T-cell (primary cell): ENCODE measurements at regions of chr1 and their contacts with region 1.

Region 1: DNA sequence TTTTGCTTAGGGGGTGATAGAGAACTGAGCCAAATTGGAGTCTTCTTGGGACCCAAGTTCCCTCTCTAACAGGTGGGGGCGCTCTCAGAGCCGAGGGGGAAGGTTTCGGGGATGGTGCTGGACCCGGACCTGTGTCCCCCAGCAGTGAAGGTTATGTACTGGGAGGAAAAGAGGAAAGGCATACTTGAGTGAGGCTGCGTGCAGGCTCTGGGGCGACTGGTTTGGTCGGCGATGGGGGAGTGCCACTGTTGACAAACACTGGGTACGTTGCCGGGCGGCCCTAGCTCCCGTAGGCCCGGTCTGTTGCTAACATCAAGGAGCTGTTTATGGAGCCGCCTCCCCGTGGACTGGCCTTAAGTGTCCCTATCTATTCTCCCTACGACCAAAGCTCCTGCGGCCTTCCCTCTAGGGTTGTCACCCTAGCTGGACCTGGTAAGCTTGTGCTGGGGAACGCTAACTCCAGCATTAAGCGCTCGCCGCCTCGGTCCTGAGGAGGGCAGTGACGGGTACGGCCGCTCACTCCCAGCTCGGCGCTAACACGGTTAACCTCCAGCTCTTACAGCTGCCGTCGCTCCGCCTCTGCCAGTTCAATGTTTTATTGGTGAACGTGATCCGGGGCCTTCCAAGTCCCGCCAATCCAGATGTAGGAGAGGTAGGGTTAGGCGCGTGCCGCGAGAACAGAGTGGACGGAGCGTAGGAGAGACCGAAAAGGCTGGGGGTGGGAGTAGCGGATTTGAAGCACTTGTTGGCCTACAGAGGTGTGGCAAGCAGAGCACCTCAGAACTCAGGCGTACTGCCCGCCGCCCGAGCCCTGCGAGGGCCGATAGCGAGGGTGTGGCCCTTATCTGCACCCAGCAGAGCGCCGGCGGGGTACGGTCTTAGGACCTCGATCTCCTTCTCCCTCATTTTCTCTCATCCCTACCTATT is at the start of gene PPOX:
- DNase-seq: peak; percentile 73 to 96 (median 91)
- ATAC-seq: peak; percentile 91 to 95 (median 94)
- H3K4me3 ChIP-seq: peak within 1 kb of the TSS; percentile 87 to 88
- H3K4me3 Mint-ChIP-seq: peak within 1 kb of the TSS; percentile 72 to 88 (median 87)
- H3K27ac ChIP-seq: peak within 1 kb of the TSS; percentile 97
- H3K27ac Mint-ChIP-seq: peak within 1 kb of the TSS; percentile 96 to 99
- H3K4me1 ChIP-seq: peaks cover 7 to 39% of the 10 kb centered on the region in 2 experiments
- H3K4me1 Mint-ChIP-seq: peaks cover 51 to 61% (median 61%) of the 10 kb centered on the region in 3 donors
- H3K27me3 ChIP-seq: no peaks in the 10 kb centered on the region
- H3K27me3 Mint-ChIP-seq: no peaks in the 10 kb centered on the region
- total RNA-seq, gene PPOX: 38.3 to 85.4 (median 69.2) TPM

Region 2: DNA sequence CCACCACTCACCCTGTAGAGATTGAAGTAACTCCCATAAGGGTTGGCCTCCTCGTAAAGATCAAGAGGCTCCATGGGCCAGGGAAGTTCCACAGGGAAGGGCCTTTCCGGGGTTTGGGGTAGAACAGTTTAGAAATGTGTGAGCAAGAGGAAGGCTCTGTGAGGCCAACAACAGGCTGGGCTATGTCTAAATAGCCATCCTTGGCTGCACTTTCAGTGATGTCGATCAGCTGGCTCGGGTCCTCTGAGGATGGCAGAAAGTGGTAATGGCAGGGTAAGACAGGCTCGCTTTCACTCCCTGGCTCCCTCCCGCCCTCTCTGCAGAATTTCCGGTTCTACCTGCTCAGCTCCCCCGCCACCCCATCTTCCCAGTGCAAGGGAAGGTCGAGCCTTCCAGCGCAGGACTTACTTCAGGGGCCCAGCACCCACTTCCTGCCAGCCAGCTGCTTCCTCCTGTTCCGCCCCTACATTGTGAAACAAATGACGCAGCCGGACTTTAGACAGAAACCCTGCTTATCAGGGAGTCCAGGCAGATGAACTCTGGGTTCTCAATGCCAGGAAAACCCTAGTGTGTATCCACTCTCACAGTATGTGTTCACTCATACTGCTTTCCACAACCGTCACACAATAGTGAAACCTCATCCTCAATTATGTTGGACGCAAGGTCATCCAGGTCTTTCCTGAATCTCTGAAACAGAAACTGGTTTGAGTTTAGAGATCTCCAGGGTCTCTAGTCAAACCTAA is 152.3 kb before region 1 on chr1:
- CTCF ChIA-PET with region 1: no interaction called
- POLR2A ChIA-PET with region 1: no interaction called
- DNase-seq: peak; percentile 41 to 76 (median 58)
- ATAC-seq: peak; percentile 81 to 92 (median 86)
- H3K4me3 ChIP-seq: peak overlapping the region; percentile 25 to 35
- H3K4me3 Mint-ChIP-seq: peak overlapping the region; percentile 71 to 78 (median 78)
- H3K27ac ChIP-seq: peak overlapping the region; percentile 89
- H3K27ac Mint-ChIP-seq: peak overlapping the region; percentile 97 to 99
- H3K4me1 ChIP-seq: peaks cover 20 to 27% of the 10 kb centered on the region in 2 experiments
- H3K4me1 Mint-ChIP-seq: peaks cover 21 to 44% (median 41%) of the 10 kb centered on the region in 3 donors
- H3K27me3 ChIP-seq: no peaks in the 10 kb centered on the region
- H3K27me3 Mint-ChIP-seq: no peaks in the 10 kb centered on the region

Region 3: DNA sequence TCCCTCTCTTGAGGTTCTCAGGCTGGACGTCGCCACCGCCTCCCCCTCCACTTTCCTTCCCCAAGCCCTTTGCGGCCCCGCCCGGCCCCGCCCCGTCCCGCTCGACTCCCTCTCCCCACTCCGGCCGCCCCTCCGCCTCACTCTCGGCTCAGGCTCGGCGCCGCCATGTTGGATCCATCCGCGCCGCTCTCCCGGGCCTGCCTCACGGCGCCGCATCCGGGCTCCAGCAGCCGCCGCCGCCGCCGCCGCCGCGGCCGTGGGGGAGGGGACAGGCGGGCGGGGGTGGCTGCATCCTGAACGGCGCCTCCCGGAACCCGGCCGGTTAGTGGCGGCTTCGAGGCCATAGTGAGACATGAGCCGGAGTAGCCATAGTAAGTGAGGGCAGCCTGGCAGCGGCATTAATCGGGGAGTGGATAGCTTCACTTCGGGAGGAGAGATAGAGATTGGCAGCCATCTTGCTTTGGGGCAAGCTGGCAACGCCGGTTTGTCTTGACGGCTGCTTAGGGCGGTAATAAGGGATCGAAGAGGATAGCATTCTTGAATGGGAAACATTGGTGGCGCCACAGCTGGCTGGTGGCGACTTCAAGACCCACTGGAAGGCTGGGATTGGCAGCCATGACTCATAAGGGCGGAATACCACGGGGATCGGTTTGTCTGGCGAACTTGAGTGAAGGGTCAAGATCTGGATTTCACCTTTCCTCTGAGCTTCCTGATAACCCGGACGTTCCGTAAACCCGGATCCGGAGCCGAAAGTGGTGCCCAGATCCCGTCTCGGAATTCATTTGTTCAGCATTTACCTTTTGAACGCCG is 33.4 kb before region 1 on chr1 and contains the start of gene DEDD:
- CTCF ChIA-PET with region 1: interaction called, 5 to 11 read pairs
- POLR2A ChIA-PET with region 1: no interaction called
- DNase-seq: peak; percentile 78 to 94 (median 87)
- ATAC-seq: peak; percentile 94 to 96 (median 95)
- H3K4me3 ChIP-seq: peak within 1 kb of the TSS; percentile 94 to 97
- H3K4me3 Mint-ChIP-seq: no peak within 1 kb of the TSS
- H3K27ac ChIP-seq: peak within 1 kb of the TSS; percentile 89
- H3K27ac Mint-ChIP-seq: peak within 1 kb of the TSS; percentile 90 to 94
- H3K4me1 ChIP-seq: peaks cover 34 to 38% of the 10 kb centered on the region in 2 experiments
- H3K4me1 Mint-ChIP-seq: peaks cover 45 to 50% (median 47%) of the 10 kb centered on the region in 3 donors
- H3K27me3 ChIP-seq: no peaks in the 10 kb centered on the region
- H3K27me3 Mint-ChIP-seq: no peaks in the 10 kb centered on the region
- total RNA-seq, gene DEDD: 34.3 to 43.6 (median 40.6) TPM

Region 4: GRCh38 chr1:161153679-161154426 is 12.2 kb before region 1 on chr1 and contains the start of gene UFC1:
- CTCF ChIA-PET with region 1: interaction called, 4 to 20 read pairs
- POLR2A ChIA-PET with region 1: interaction called, 4 to 18 read pairs
- DNase-seq: peak; percentile 72 to 94 (median 82)
- ATAC-seq: peak; percentile 93 to 97 (median 96)
- H3K4me3 ChIP-seq: peak within 1 kb of the TSS; percentile 88 to 93
- H3K4me3 Mint-ChIP-seq: peak within 1 kb of the TSS; percentile 94 to 98 (median 97)
- H3K27ac ChIP-seq: peak within 1 kb of the TSS; percentile 97
- H3K27ac Mint-ChIP-seq: peak within 1 kb of the TSS; percentile 99 to 100
- H3K4me1 ChIP-seq: peaks cover 12 to 19% of the 10 kb centered on the region in 2 experiments
- H3K4me1 Mint-ChIP-seq: peaks cover 28 to 35% (median 33%) of the 10 kb centered on the region in 3 donors
- H3K27me3 ChIP-seq: peaks cover 0 to 2% of the 10 kb centered on the region in 2 experiments
- H3K27me3 Mint-ChIP-seq: no peaks in the 10 kb centered on the region
- total RNA-seq, gene UFC1: 82.9 to 109 (median 93.8) TPM

Region 5: DNA sequence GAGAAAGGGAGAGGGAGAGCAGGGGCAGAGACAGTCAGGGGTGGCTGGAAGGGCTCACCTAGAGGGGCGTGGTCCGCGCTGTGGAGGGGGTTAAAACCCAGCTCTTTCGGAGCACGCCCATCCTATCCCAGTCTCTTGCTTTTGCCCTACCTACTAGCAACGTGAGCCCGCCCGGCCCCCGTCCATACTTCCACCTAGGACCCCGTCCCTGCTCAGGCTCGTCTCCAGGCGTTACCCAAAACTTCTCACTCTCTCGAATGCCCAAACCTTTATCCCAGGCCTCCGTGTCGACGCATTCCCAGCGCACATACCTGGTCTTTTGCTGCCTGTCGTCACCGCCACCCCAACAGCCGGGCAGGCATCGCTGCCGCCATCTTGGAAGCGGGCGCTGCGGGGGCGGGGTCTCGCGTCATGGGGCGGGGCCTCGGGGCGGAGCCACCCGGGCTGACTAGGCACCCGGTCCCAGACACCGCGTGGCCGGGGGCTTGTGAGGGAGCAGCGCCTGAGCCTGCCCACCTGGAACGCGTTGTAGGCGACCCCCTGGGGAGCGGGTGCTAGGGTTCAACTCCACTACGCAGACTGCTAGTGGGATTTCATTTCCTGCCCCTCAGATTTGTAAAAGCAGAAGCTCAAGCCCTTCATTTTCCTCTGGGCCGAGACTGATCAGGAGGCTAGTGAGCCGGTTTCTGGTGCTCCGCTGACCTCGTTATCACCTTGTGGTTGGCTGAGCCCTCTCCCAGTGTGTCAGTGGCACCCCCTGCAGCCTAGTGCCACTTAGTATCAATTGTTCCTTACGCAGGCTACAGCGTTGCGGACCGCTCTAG is 11.3 kb after region 1 on chr1 and contains the start of gene B4GALT3:
- CTCF ChIA-PET with region 1: interaction called, 4 to 13 read pairs
- POLR2A ChIA-PET with region 1: interaction called, 5 to 8 read pairs
- DNase-seq: peak; percentile 72 to 97 (median 88)
- ATAC-seq: peak; percentile 87 to 93 (median 90)
- H3K4me3 ChIP-seq: peak within 1 kb of the TSS; percentile 93
- H3K4me3 Mint-ChIP-seq: peak within 1 kb of the TSS; percentile 91 to 99 (median 96)
- H3K27ac ChIP-seq: peak within 1 kb of the TSS; percentile 84
- H3K27ac Mint-ChIP-seq: peak within 1 kb of the TSS; percentile 96 to 99
- H3K4me1 ChIP-seq: peaks cover 24 to 60% of the 10 kb centered on the region in 2 experiments
- H3K4me1 Mint-ChIP-seq: peaks cover 75 to 83% (median 80%) of the 10 kb centered on the region in 3 donors
- H3K27me3 ChIP-seq: no peaks in the 10 kb centered on the region
- H3K27me3 Mint-ChIP-seq: no peaks in the 10 kb centered on the region
- total RNA-seq, gene B4GALT3: 48.4 to 77.8 (median 69.3) TPM

Region 6: GRCh38 chr1:161185282-161185682 is 19.3 kb after region 1 on chr1:
- CTCF ChIA-PET with region 1: interaction called, 4 to 13 read pairs
- POLR2A ChIA-PET with region 1: interaction called in 1 of 2 experiments, 13 read pairs
- DNase-seq: peak; percentile 60 to 91 (median 80)
- ATAC-seq: peak; percentile 74 to 89 (median 75)
- H3K4me3 ChIP-seq: peak overlapping the region; percentile 5 to 45
- H3K4me3 Mint-ChIP-seq: peak overlapping the region; percentile 76 to 78 (median 76)
- H3K27ac ChIP-seq: peak overlapping the region; percentile 89
- H3K27ac Mint-ChIP-seq: peak overlapping the region; percentile 95
- H3K4me1 ChIP-seq: peaks cover 63 to 87% of the 10 kb centered on the region in 2 experiments
- H3K4me1 Mint-ChIP-seq: peaks cover 81 to 86% (median 84%) of the 10 kb centered on the region in 3 donors
- H3K27me3 ChIP-seq: no peaks in the 10 kb centered on the region
- H3K27me3 Mint-ChIP-seq: no peaks in the 10 kb centered on the region

Region 7: DNA sequence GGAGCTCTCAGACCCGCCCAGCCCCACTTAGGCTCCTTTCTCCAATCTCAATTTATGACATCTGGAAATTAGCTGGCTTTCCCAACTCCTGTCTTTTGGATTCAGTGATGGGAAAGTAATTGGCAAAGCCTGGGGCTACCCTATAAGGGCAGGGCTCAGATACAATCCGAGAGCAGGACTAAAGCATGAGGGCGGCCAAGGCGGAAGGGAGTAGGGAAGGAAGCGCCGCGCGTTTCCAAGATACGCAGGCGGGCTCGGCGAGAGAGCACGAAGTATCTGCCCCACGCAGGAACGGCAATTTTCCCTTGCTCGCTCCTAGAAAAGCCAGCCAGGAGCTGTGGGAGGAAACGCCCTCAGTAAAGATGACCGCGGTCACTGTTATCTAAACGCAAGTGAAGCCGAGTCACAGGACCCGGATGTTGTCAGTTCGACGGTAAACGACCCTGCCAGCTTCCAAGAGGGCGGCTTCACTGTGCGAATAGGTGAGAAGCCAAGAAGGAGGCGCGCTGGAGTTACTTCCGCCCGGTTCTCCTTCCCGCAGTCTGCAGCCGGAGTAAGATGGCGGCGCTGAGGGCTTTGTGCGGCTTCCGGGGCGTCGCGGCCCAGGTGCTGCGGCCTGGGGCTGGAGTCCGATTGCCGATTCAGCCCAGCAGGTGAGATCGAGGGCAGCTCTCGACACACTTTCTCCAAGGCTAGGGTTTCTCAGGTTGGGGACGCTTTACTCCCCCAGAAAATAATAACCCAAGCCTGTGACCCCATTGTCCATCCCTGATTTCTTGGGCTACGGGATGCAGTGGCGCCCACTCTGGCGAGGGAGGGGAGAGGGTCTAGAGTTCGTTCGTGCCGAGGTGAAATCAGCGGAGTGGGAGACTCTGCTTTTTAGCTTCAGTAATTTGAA is 36.1 kb after region 1 on chr1 and contains the start of gene NDUFS2:
- CTCF ChIA-PET with region 1: interaction called in 1 of 2 experiments, 13 read pairs
- POLR2A ChIA-PET with region 1: interaction called in 1 of 2 experiments, 8 read pairs
- DNase-seq: peak; percentile 82 to 99 (median 96)
- ATAC-seq: peak; percentile 98
- H3K4me3 ChIP-seq: peak within 1 kb of the TSS; percentile 90 to 91
- H3K4me3 Mint-ChIP-seq: peak within 1 kb of the TSS; percentile 93 to 95 (median 95)
- H3K27ac ChIP-seq: peak within 1 kb of the TSS; percentile 79
- H3K27ac Mint-ChIP-seq: peak within 1 kb of the TSS; percentile 97 to 98
- H3K4me1 ChIP-seq: peaks cover 22 to 49% of the 10 kb centered on the region in 2 experiments
- H3K4me1 Mint-ChIP-seq: peaks cover 64 to 72% (median 72%) of the 10 kb centered on the region in 3 donors
- H3K27me3 ChIP-seq: no peaks in the 10 kb centered on the region
- H3K27me3 Mint-ChIP-seq: no peaks in the 10 kb centered on the region
- total RNA-seq, gene NDUFS2: 57.3 to 92.2 (median 88.2) TPM